Psoas muscle (tissue), 8 donors: ENCODE measurements at regions of chr3 and their contacts with region 1.

Region 1: DNA sequence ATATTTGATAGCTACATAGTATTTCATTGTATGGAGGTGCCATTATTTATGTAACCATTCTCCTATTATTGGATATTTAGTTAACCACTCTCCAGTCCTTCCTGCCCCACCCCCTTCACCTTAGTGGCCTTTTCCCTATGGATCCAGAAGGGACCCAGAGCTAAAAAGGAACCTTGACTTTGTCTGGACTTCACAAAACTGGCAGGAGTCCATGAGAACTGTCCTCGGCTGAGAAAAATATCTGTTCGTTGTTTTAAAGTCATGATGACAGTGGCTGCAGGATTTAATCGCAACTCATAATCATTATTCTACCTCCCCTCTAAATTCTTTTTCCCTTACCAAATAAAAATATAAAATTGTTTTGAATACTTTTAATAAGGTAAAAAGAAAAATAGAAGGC is 129.7 kb downstream of the CMSS1 start:
- DNase-seq: no peak
- ATAC-seq: no peak
- H3K4me3 ChIP-seq: no peak overlapping the region
- H3K27ac ChIP-seq: peak overlapping the region; percentile 63
- H3K4me1 ChIP-seq: peaks cover 69% of the 10 kb centered on the region
- H3K27me3 ChIP-seq: no peaks in the 10 kb centered on the region
- CTCF ChIP-seq: no peak

Region 2: GRCh38 chr3:99962703-99963102 is 15.3 kb after region 1 on chr3:
- intact Hi-C with region 1: loop called in 1 of 2 experiments (anchors 2 kb)
- DNase-seq: no peak
- ATAC-seq: no peak
- H3K4me3 ChIP-seq: no peak overlapping the region
- H3K27ac ChIP-seq: peak overlapping the region; percentile 34
- H3K4me1 ChIP-seq: peaks cover 53% of the 10 kb centered on the region
- H3K27me3 ChIP-seq: no peaks in the 10 kb centered on the region
- CTCF ChIP-seq: no peak